Activated T-helper 2 cell treated with anti-CD3 and anti-CD28 coated beads, Interferon-gamma antibody, Interleukin-2, Interleukin-4, amounts not matched to agents 10 μg/mL and 5 μg/mL and 100 μg/mL, durations not matched to agents 14 hours and 24 hours and 36 hours (primary cell): ENCODE measurements at regions of chr6 and their contacts with region 1.

Region 1: GRCh38 chr6:116531675-116532570 is 13.6 kb downstream of the TRAPPC3L start:
- DNase-seq: peak; percentile 34
- H3K4me3 Mint-ChIP-seq: no peak overlapping the region
- H3K27ac Mint-ChIP-seq: no peak overlapping the region
- H3K4me1 Mint-ChIP-seq: peaks cover 1% of the 10 kb centered on the region
- H3K27me3 Mint-ChIP-seq: peaks cover 53% of the 10 kb centered on the region

Region 2: GRCh38 chr6:116217069-116217468 is 314.9 kb before region 1 on chr6:
- intact Hi-C with region 1: loop called (anchors 2 kb)
- DNase-seq: no peak
- H3K4me3 Mint-ChIP-seq: no peak overlapping the region
- H3K27ac Mint-ChIP-seq: no peak overlapping the region
- H3K4me1 Mint-ChIP-seq: no peaks in the 10 kb centered on the region
- H3K27me3 Mint-ChIP-seq: no peaks in the 10 kb centered on the region

Region 3: DNA sequence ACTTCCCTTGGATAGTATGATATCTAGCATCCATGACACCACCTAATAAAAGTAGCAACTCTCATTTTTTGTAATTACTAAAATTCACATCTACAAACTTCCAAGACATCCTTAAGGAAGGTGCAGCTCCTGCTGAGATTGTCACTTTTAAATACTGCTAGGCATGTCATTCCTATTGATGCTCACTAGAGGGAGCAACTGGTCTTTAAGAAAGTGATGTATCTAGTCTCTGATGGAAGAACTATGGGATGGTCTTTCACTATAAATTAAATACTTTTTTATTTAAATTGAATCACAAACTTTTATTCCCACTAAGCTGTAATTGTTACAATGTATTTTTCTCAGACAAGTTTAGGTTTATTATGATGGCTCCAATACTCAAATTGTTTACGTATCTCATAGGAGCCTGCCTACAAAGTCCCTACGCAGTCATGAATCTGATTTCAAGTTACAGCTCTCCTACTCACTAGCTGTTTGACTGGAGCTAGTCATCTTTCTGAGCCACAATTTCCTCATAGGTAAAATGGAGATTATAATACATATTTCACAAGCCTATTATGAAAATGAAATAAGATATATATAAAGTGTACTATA is 244.1 kb before region 1 on chr6:
- intact Hi-C with region 1: loop called (anchors 1 kb)
- DNase-seq: no peak
- H3K4me3 Mint-ChIP-seq: no peak overlapping the region
- H3K27ac Mint-ChIP-seq: no peak overlapping the region
- H3K4me1 Mint-ChIP-seq: no peaks in the 10 kb centered on the region
- H3K27me3 Mint-ChIP-seq: no peaks in the 10 kb centered on the region

Region 4: DNA sequence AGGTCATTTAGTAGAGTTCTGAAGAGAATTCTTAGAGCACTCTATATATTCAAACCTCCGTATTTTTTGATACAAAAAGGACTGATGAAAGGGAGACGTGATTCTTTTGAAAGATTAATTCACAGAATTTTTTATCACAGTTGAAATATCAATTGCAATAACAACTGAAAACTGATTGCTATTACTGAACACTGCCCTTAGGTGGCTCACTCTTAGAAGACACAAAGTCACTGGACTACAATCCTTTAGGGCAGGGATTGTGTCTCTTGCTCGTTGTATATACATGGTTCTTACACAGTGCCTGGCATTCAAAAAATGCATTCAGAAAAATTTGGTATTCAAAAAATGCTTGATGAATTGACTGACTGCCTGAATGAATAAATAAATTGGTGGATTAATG is 87.8 kb before region 1 on chr6:
- intact Hi-C with region 1: loop called (anchors 1 kb)
- DNase-seq: no peak
- H3K4me3 Mint-ChIP-seq: no peak overlapping the region
- H3K27ac Mint-ChIP-seq: no peak overlapping the region
- H3K4me1 Mint-ChIP-seq: peaks cover 20% of the 10 kb centered on the region
- H3K27me3 Mint-ChIP-seq: peaks cover 31% of the 10 kb centered on the region

Region 5: DNA sequence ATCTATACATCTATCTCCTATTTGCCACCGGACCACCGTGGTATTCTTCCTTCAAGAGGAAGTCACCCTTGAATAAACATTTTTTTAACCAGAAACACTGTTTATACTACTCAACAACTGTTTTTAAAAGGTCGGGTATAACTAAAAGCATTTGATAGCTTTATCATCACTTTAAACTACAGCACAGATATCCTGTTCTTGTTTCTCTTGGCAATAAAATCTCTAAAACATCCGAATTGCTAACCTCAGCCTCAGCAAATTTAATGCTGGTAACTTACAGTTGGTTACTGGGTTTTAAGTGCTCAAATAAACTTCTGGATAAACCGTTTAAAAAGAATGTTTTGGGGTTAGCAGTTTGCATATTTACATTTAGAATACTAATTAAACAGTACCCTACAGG is 116.2 kb after region 1 on chr6:
- intact Hi-C with region 1: loop called (anchors 5 kb)
- DNase-seq: no peak
- H3K4me3 Mint-ChIP-seq: no peak overlapping the region
- H3K27ac Mint-ChIP-seq: no peak overlapping the region
- H3K4me1 Mint-ChIP-seq: peaks cover 8% of the 10 kb centered on the region
- H3K27me3 Mint-ChIP-seq: no peaks in the 10 kb centered on the region